ENCODE measurements at regions of chr5 and their contacts with region 1.

Region 1: DNA sequence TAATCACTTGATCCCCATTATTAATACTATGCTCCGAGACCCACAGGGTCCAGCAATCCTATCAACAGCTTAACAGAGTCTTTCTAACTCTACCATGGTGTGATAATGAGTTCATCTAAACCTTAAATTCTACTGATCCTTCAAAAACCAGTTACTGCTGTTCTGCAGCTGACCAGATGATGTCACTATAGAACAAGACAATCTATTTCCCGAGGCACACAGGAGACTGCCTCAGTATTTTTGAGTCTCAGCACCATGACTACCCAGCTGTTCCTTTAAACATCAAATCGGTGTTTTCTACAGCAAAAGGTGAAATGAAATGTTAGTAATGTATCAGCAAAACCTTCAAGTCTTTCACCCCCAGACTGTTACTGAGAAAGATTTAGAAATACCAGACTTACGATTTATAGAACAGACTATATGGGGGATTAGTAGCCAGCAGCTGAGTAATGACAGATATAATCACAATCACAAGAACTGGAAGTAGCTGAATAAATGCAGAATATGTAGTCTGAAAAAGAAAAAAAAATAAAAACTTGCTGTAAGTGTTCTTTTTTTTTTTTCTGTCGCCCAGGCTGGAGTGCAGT is 16.9 kb downstream of the DNAJC18 start:
- DNase-seq: no peak
- H3K4me3 ChIP-seq: no peak overlapping the region
- H3K27ac ChIP-seq: no peak overlapping the region
- H3K4me1 ChIP-seq: peaks cover 8 to 28% (median 12%) of the 10 kb centered on the region in 4 donors
- H3K27me3 ChIP-seq: no peaks in the 10 kb centered on the region
- CTCF ChIP-seq: peak; percentile 70 to 85 (median 77)
- EP300 ChIP-seq: no peak
- POLR2A ChIP-seq: no peak

Region 2: GRCh38 chr5:139501381-139501780 is 79.0 kb after region 1 on chr5:
- in situ Hi-C with region 1: loop called in 1 of 4 experiments (anchors 10 kb)
- intact Hi-C with region 1: no loop called
- DNase-seq: no peak
- H3K4me3 ChIP-seq: no peak overlapping the region
- H3K27ac ChIP-seq: no peak overlapping the region
- H3K4me1 ChIP-seq: no peaks in the 10 kb centered on the region
- H3K27me3 ChIP-seq: no peaks in the 10 kb centered on the region
- CTCF ChIP-seq: no peak
- EP300 ChIP-seq: no peak
- POLR2A ChIP-seq: no peak

Region 3: DNA sequence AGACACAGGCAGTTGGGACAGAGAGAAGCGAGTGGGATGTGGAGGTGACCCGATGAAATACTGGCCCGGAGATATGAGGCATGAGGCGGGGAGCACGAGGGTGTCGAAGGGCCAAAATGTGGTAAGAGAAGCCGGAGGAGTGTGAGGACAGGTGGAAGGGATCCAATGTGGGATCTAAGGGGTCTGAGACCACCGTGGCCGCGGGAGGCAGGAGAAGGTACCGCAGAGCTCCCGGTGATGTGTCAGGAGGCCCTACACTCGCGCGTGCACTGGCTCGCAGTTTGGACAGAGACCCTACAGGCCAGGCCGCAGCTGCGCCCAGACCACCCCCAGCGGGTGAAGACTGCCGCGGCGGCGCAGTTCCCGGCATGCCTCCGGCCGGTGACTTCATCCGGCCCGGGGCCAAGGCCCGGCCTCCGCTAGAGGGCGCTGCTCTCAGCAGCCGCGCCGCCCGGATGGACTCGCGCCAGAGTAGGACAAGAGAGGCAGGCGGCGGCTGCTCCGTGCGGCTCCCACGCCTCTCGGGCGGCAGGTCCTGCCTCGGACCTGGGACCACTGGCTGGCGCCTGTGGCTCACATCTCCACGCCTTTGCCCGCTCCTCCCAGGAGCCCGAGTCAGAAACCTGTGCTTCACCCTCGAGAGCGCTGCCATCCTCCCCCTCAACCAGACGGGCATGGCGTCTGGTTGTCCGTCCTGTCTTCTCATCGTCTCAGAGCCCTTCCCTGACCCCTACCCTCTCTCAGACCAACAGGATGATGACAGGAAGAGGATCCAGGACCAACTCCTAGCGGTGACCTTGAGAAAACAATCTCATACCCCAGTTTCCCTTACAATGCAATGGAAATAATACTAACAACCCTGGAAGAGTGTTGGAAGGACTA is 95.5 kb after region 1 on chr5:
- in situ Hi-C with region 1: loop called in 3 of 4 experiments (anchors 5 to 10 kb)
- intact Hi-C with region 1: loop called (anchors 5 kb)
- DNase-seq: peak; percentile 93
- H3K4me3 ChIP-seq: peak overlapping the region; percentile 34 to 56 (median 49)
- H3K27ac ChIP-seq: peak overlapping the region; percentile 72 to 86 (median 85)
- H3K4me1 ChIP-seq: peaks cover 0 to 9% (median 8%) of the 10 kb centered on the region in 4 donors
- H3K27me3 ChIP-seq: no peaks in the 10 kb centered on the region
- CTCF ChIP-seq: peak; percentile 93 to 99 (median 98)
- EP300 ChIP-seq: no peak
- POLR2A ChIP-seq: peak; percentile 74

Region 4: GRCh38 chr5:139765409-139766217 is 343.2 kb after region 1 on chr5:
- in situ Hi-C with region 1: loop called in 1 of 4 experiments (anchors 25 kb)
- intact Hi-C with region 1: loop called (anchors 10 kb)
- DNase-seq: peak; percentile 79
- H3K4me3 ChIP-seq: peak overlapping the region; percentile 40 to 63 (median 49)
- H3K27ac ChIP-seq: peak overlapping the region in 2 of 4 donors; percentile 40 to 42
- H3K4me1 ChIP-seq: peaks cover 0 to 15% (median 0%) of the 10 kb centered on the region in 4 donors
- H3K27me3 ChIP-seq: peaks cover 31% of the 10 kb centered on the region
- CTCF ChIP-seq: peak; percentile 95 to 100 (median 99)
- EP300 ChIP-seq: no peak
- POLR2A ChIP-seq: no peak